ENCODE measurements at regions of chr6 and their contacts with region 1.

Region 1: GRCh38 chr6:105097288-105097687 is 82.5 kb downstream of the POPDC3 start:
- DNase-seq: no peak
- CTCF ChIP-seq: no peak

Region 2: GRCh38 chr6:105402939-105403935 is 305.9 kb after region 1 on chr6 and contains the start of gene PREP:
- in situ Hi-C with region 1: loop called (anchors 10 kb)
- DNase-seq: peak; percentile 96
- CTCF ChIP-seq: peak; percentile 81

Region 3: GRCh38 chr6:105573138-105573537 is 475.9 kb after region 1 on chr6:
- in situ Hi-C with region 1: no loop called
- DNase-seq: no peak
- CTCF ChIP-seq: no peak

Measured in GM13977 (cell line).